Prostate gland (tissue), 2 donors: ENCODE measurements at regions of chr5 and their contacts with region 1.

Region 1: GRCh38 chr5:177537389-177538361 is 16.7 kb downstream of the FAM193B start:
- DNase-seq: peak; percentile 87
- H3K4me3 ChIP-seq: no peak overlapping the region
- H3K27ac ChIP-seq: peak overlapping the region; percentile 76 to 84
- H3K4me1 ChIP-seq: peaks cover 24% of the 10 kb centered on the region
- H3K27me3 ChIP-seq: no peaks in the 10 kb centered on the region
- CTCF ChIP-seq: no peak
- POLR2A ChIP-seq: no peak

Region 2: DNA sequence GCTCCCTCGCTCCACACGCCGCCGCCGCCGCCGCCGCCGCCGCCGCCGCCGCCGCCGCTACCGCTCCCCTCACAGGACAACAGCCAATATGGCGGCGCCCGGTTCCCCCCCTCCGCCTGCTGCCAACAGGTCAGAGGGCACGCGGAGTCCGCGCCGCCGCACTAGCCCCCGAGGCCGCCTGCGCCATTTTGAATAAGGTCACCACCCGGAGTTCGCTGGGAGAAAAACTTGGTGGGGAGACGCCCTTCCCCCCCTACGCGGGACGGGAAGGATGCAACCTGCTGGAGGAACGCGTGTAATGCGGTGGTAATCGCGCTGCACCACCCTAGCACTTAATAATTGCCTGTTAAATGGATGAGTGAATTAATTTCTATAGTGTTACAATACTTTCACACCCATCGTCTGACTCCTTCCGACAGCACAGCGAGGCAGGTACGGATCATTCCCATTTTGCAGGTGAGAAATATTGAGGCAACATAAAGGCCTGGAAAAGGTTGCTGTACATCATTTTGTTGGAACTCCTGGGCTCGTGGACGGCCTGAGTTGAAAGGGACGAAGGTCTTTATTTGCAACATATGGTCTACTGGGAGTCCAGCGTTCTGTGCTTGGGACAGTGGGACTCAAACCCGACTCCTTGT is 16.9 kb after region 1 on chr5 and contains the start of gene FAM193B:
- intact Hi-C with region 1: loop called (anchors 1 kb)
- DNase-seq: peak; percentile 91
- H3K4me3 ChIP-seq: peak within 1 kb of the TSS; percentile 91 to 95
- H3K27ac ChIP-seq: peak within 1 kb of the TSS; percentile 90
- H3K4me1 ChIP-seq: peaks cover 8% of the 10 kb centered on the region
- H3K27me3 ChIP-seq: no peaks in the 10 kb centered on the region
- CTCF ChIP-seq: peak in 1 of 4 experiments; percentile 11
- POLR2A ChIP-seq: peak; percentile 52
- total RNA-seq, gene FAM193B: 59.6 to 112 TPM

Region 3: GRCh38 chr5:177592010-177592834 is 54.5 kb after region 1 on chr5 and contains the start of gene TMED9:
- intact Hi-C with region 1: loop called (anchors 5 kb)
- DNase-seq: peak; percentile 86
- H3K4me3 ChIP-seq: peak within 1 kb of the TSS; percentile 91
- H3K27ac ChIP-seq: peak within 1 kb of the TSS; percentile 73 to 75
- H3K4me1 ChIP-seq: peaks cover 3% of the 10 kb centered on the region
- H3K27me3 ChIP-seq: no peaks in the 10 kb centered on the region
- CTCF ChIP-seq: peak in 2 of 4 experiments; percentile 51 to 66
- POLR2A ChIP-seq: peak; percentile 96
- total RNA-seq, gene TMED9: 136 to 176 TPM